Astrocyte of the cerebellum (primary cell): ENCODE measurements at regions of chr1 and their contacts with region 1.

Region 1: GRCh38 chr1:197062692-197063091 is 4.4 kb downstream of the F13B start:
- DNase-seq: no peak
- H3K4me3 ChIP-seq: no peak overlapping the region
- CTCF ChIP-seq: no peak

Region 2: DNA sequence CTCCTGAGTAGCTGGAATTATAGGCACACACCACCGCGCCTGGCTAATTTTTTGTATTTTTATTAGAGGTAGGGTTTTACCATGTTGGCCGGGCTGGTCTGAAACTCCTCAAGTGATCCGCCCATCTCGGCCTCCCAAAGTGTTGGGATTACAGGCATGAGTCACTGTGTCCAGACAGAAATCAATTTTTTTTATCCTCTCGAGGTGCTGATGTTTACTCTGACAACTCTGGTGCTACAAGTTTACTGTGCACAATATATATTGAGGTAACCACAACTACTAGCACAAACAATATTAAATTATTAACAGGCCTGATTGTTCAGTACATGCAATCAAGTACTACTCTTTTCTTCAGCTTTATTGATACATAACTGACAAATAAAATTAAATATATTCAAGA is 35.3 kb before region 1 on chr1:
- in situ Hi-C with region 1: loop called (anchors 5 kb)
- DNase-seq: no peak
- H3K4me3 ChIP-seq: no peak overlapping the region
- CTCF ChIP-seq: no peak